GM10248 (cell line): ENCODE measurements at regions of chr11 and their contacts with region 1.

Region 1: DNA sequence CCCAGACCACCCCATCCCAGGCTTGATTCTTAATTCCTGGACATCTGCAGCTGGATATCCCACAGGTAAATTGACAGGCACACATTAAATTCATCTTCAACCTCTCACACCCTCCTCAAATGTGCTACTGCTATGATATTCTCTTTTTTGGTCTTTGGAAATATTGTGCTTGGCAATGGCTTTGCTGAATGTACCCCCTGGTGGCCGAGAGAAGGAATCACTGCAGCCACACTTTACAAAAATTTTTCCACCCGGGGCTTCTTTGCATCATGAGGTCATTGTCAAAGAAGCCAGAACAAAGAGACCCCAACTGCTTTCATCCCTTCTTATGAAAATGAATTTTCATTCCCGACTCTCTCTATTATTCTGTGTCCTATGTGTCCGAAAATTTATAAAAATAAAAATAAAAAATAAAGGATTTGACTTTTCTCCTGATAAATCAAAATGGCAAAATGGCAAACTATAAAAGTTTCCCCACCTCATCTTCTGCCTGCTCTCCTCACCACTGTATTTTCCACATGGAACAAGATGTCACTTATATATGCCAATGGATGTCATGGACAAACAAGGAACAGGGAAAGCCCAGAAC is 15.0 kb upstream of the CYB5R2 start:
- DNase-seq: peak; percentile 39
- CTCF ChIP-seq: peak; percentile 72

Region 2: DNA sequence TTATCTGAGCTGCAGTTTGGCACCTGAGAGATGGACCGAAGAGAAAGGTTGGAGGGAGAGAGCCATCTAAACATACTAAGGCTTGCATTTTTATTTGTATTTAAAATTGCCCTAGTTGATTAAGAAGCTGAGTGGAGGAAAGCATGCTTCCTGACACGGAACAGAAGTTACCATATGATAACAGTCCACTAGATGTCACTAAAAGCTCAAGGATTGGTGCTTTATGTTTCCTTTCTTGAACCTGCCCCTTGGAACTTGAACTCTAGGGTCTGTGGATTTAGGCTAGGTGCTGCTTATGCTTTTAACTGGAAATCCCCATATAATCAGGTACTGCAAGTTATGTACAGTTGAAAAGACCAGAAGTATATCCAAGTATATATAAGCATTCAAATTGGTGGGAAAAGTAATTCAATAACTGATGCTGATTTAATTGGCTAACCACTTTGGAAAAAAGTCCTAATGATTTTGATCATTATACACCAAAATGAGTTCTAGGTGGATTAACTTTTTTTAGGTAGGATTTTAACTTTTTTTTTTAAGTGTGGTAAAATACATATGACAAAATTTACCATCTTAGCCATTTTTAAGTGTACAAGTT is 590.0 kb before region 1 on chr11:
- CTCF ChIA-PET with region 1: interaction called, 15 read pairs
- POLR2A ChIA-PET with region 1: no interaction called
- DNase-seq: peak; percentile 50
- CTCF ChIP-seq: peak; percentile 66

Region 3: GRCh38 chr11:7376386-7376785 is 311.9 kb before region 1 on chr11:
- CTCF ChIA-PET with region 1: no interaction called
- POLR2A ChIA-PET with region 1: no interaction called
- DNase-seq: no peak
- CTCF ChIP-seq: no peak

Region 4: GRCh38 chr11:7571640-7572000 is 116.7 kb before region 1 on chr11:
- CTCF ChIA-PET with region 1: interaction called, 16 read pairs
- POLR2A ChIA-PET with region 1: no interaction called
- DNase-seq: peak; percentile 42
- CTCF ChIP-seq: peak; percentile 63

Region 5: GRCh38 chr11:7672960-7673723 is 15.2 kb before region 1 on chr11 and contains the start of gene CYB5R2:
- CTCF ChIA-PET with region 1: interaction called, 43 read pairs
- POLR2A ChIA-PET with region 1: no interaction called
- DNase-seq: peak; percentile 76
- CTCF ChIP-seq: no peak

Region 6: GRCh38 chr11:7994581-7995278 is 306.4 kb after region 1 on chr11:
- CTCF ChIA-PET with region 1: no interaction called
- POLR2A ChIA-PET with region 1: no interaction called
- DNase-seq: no peak
- CTCF ChIP-seq: no peak